Stomach (tissue), 19 donors: ENCODE measurements at regions of chr11 and their contacts with region 1.

Region 1: DNA sequence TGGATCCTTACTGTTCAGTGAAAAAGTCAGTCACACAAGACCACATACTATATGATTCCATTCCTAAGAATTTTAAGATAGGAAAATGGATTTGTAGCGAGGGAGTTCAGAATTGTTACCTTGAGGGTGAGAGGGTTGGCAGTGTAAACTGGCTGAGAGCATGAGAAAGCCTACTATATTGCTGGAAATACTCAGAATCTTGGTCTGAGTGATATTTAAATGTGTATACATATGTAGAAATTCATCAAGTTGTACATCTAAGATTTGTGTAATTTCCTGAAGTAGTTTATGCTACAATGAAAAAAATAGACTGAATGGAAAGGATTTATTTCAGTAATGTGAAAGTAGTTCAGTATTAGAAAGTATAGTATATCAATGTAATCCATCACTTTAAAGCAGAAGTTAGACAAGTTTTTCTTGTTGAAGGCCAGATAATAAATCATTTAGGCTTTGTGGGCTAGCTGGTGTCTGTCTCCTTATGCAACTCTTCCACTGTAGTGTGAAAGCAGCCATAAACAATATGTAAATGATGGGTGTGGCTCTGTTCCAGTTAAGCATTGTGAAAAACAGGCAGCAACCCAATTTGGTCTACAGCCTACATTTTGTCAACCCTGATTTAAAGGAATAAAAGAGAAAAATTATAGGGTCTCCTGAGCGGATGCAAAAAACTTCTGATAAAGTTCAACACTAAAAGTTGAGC is 127.2 kb upstream of the THY1 start:
- DNase-seq: peak in 1 of 2 donors; percentile 48
- H3K4me3 ChIP-seq: no peak overlapping the region
- H3K27ac ChIP-seq: no peak overlapping the region
- H3K4me1 ChIP-seq: no peaks in the 10 kb centered on the region
- H3K27me3 ChIP-seq: no peaks in the 10 kb centered on the region
- CTCF ChIP-seq: no peak
- EP300 ChIP-seq: no peak
- POLR2A ChIP-seq: no peak

Region 2: GRCh38 chr11:119295178-119295577 is 255.0 kb before region 1 on chr11:
- intact Hi-C with region 1: no loop called
- DNase-seq: no peak
- H3K4me3 ChIP-seq: no peak overlapping the region
- H3K27ac ChIP-seq: no peak overlapping the region
- H3K4me1 ChIP-seq: peaks cover 0 to 22% (median 14%) of the 10 kb centered on the region in 4 donors
- H3K27me3 ChIP-seq: no peaks in the 10 kb centered on the region
- CTCF ChIP-seq: no peak
- EP300 ChIP-seq: no peak
- POLR2A ChIP-seq: no peak

Region 3: GRCh38 chr11:119634301-119634700 is 84.1 kb after region 1 on chr11:
- intact Hi-C with region 1: loop called (anchors 10 kb)
- DNase-seq: no peak
- H3K4me3 ChIP-seq: no peak overlapping the region
- H3K27ac ChIP-seq: no peak overlapping the region
- H3K4me1 ChIP-seq: no peaks in the 10 kb centered on the region
- H3K27me3 ChIP-seq: peaks cover 0 to 23% (median 0%) of the 10 kb centered on the region in 3 donors
- CTCF ChIP-seq: no peak
- EP300 ChIP-seq: no peak
- POLR2A ChIP-seq: no peak

Region 4: DNA sequence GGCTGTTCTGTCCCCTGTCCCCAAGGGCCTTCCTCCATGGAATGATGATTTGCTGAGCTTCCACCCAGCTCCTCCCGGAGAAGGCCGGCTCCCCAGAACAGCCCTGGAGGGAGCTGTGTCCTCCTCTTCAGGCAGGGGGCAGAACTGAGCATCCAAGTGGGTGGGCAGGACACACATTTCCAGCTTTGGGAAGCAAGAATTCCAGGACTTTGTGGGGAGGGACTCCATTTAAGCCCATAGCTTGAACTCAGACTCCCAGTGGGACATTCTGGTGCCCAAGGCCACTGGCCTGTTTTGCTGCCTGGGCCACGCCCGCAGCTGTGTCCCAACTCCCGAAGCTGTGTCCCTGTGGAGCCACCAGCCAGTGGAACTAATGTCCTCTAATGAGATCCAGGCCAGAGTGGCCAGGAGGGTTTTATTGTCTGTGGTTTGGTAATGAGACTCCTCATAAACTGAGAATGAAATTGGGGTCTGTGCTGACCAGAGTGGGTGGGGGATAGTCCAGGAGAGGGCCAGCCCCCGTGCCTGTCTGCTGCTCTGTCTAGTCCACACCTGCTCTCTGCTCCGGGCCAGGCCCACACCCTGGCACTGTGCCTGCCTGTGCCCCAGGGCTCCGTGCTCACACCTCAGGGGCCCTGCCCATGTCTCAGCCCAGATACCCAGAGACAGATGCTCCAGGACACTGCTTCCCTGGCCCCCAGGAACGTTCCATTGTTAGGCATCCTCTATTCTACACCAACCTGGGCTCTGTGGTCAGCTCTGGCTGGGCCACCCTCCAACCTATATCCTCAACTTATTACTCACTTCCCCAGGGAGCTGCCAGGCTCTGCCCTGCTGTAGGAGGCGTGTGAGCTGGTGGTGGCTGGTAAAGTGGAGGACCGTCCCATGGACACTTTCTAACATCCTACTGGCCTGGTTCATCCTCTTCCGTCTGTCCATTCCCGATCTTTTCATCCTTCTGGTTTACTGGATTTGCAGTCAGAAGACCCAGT is 171.2 kb after region 1 on chr11:
- intact Hi-C with region 1: no loop called
- DNase-seq: peak in 1 of 2 donors; percentile 58
- H3K4me3 ChIP-seq: no peak overlapping the region
- H3K27ac ChIP-seq: no peak overlapping the region
- H3K4me1 ChIP-seq: peaks cover 0 to 26% (median 6%) of the 10 kb centered on the region in 4 donors
- H3K27me3 ChIP-seq: no peaks in the 10 kb centered on the region
- CTCF ChIP-seq: peak in 1 of 7 experiments; percentile 34
- EP300 ChIP-seq: no peak
- POLR2A ChIP-seq: no peak